ENCODE measurements at regions of chr13 and their contacts with region 1.

Region 1: GRCh38 chr13:20902438-20903163 is at the start of gene XPO4:
- DNase-seq: peak; percentile 77 to 81 (median 79)
- H3K4me3 ChIP-seq: peak within 1 kb of the TSS; percentile 97 to 98
- H3K4me3 Mint-ChIP-seq: peak within 1 kb of the TSS; percentile 93 to 98 (median 96)
- H3K27ac ChIP-seq: peak within 1 kb of the TSS; percentile 89
- H3K27ac Mint-ChIP-seq: peak within 1 kb of the TSS; percentile 89 to 98 (median 95)
- H3K4me1 ChIP-seq: peaks cover 34% of the 10 kb centered on the region
- H3K4me1 Mint-ChIP-seq: peaks cover 23 to 38% (median 29%) of the 10 kb centered on the region in 4 donors
- H3K27me3 ChIP-seq: no peaks in the 10 kb centered on the region
- H3K27me3 Mint-ChIP-seq: peaks cover 0 to 2% of the 10 kb centered on the region in 2 donors
- total RNA-seq, gene XPO4: 25.5 to 27.4 TPM

Region 2: DNA sequence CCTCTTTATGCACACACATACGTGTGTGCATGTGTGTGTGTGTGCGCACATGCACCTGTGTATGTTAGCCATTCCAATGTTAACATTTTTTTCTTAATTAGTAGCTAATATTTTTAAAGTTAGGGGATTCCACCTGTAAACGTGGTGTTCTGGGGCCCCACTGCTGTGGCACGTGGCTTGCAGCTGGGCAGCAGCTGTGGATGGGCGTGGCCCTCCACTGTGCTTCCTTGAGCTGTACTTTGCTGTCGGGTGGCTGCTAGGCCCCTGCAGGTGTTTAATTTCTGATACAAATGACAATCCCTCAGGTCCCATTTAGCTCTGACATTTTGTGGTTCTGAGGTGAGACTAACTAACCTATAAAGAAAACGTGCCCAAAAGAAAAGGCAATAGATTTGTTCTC is 611.6 kb before region 1 on chr13:
- CTCF ChIA-PET with region 1: no interaction called
- POLR2A ChIA-PET with region 1: no interaction called
- intact Hi-C with region 1: no loop called
- DNase-seq: no peak
- H3K4me3 ChIP-seq: no peak overlapping the region
- H3K4me3 Mint-ChIP-seq: no peak overlapping the region
- H3K27ac ChIP-seq: no peak overlapping the region
- H3K27ac Mint-ChIP-seq: no peak overlapping the region
- H3K4me1 ChIP-seq: no peaks in the 10 kb centered on the region
- H3K4me1 Mint-ChIP-seq: no peaks in the 10 kb centered on the region
- H3K27me3 ChIP-seq: no peaks in the 10 kb centered on the region
- H3K27me3 Mint-ChIP-seq: peaks cover 0 to 2% of the 10 kb centered on the region in 2 donors

Region 3: DNA sequence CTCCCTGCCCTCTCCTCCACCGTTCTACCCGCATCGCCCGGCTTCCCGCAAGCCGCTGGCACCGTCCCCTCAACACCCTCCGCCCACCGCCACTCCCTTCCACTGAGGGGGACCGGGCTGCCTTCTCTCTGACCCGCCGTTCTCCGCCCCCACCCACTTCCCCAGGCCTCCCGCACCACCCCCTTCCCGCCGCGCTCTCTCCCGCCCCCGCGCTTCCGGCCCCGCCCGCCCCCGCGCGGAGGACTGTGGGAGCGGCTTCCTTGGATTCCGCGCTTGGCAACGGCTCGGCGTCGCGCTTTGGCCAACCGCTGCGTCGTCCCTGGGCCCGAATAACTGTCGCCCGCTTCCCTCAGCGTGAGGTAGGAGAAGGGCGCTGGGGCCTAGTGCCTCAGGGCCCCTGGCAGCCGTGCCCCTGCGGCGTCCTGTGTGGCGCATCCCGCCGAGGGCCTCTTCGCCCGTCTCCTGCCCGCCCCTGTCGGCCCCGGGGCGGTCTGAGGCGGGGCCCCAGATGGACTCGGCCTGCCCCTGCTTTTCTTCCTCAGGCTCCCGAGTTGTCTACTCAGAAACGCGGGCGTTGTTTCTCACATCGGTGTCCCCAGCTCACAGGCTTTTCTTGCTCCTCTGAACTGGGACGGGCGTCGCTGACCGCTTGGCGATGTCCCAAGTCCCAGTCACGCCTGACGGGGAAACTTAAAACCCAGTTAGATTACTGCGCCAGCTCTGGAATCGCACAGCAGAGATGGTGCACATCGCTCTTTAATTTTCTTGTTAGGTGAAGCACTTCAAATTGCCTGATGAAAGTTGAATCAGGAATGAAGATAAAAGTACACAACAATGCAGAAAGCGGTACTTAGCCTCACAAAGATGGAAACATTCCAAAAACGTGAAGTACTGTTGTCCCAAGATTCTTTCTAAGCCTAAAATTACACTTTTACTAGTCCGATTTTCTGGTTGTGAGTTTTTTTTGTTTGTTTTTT is 335.4 kb before region 1 on chr13 and contains the start of gene IFT88:
- CTCF ChIA-PET with region 1: no interaction called
- POLR2A ChIA-PET with region 1: interaction called, 3 read pairs
- intact Hi-C with region 1: loop called (anchors 2 kb)
- DNase-seq: peak; percentile 78 to 86 (median 80)
- H3K4me3 ChIP-seq: peak within 1 kb of the TSS; percentile 56 to 61
- H3K4me3 Mint-ChIP-seq: peak within 1 kb of the TSS; percentile 92 to 95 (median 94)
- H3K27ac ChIP-seq: peak within 1 kb of the TSS; percentile 53
- H3K27ac Mint-ChIP-seq: peak within 1 kb of the TSS; percentile 92 to 96 (median 92)
- H3K4me1 ChIP-seq: peaks cover 16% of the 10 kb centered on the region
- H3K4me1 Mint-ChIP-seq: peaks cover 10 to 19% (median 14%) of the 10 kb centered on the region in 4 donors
- H3K27me3 ChIP-seq: no peaks in the 10 kb centered on the region
- H3K27me3 Mint-ChIP-seq: no peaks in the 10 kb centered on the region
- total RNA-seq, gene IFT88: 8.3 to 9.8 TPM

Region 4: GRCh38 chr13:20891768-20892167 is 10.8 kb before region 1 on chr13:
- CTCF ChIA-PET with region 1: interaction called, 3 read pairs
- POLR2A ChIA-PET with region 1: interaction called, 16 read pairs
- intact Hi-C with region 1: no loop called
- DNase-seq: peak in 4 of 5 donors; percentile 43 to 51 (median 48)
- H3K4me3 ChIP-seq: no peak overlapping the region
- H3K4me3 Mint-ChIP-seq: peak overlapping the region in 5 of 8 donors; percentile 13 to 57 (median 26)
- H3K27ac ChIP-seq: no peak overlapping the region
- H3K27ac Mint-ChIP-seq: peak overlapping the region in 4 of 7 donors; percentile 17 to 68 (median 47)
- H3K4me1 ChIP-seq: peaks cover 16% of the 10 kb centered on the region
- H3K4me1 Mint-ChIP-seq: peaks cover 27 to 62% (median 38%) of the 10 kb centered on the region in 4 donors
- H3K27me3 ChIP-seq: no peaks in the 10 kb centered on the region
- H3K27me3 Mint-ChIP-seq: no peaks in the 10 kb centered on the region

Region 5: DNA sequence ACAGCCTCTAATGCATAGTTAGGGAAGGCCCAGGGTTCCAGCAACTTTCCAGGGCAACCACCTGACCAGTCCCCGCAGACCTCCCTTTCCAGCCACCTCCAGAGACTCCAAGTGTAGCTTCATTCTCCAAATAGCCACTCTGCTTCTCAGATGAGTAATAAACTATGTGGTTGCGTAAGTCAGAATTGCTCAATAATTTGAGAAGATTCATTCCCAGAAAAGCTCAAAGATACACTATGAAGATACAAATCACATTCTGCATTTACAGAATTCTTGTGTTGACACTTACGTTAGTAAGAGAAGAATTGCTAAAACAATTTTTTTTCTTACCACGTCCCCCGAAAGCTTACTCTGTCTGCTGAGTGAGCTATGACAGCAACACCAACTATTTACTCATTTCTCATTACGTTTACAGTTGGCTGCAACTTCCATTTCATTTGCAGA is 167.0 kb after region 1 on chr13:
- CTCF ChIA-PET with region 1: no interaction called
- POLR2A ChIA-PET with region 1: no interaction called
- intact Hi-C with region 1: no loop called
- DNase-seq: no peak
- H3K4me3 ChIP-seq: no peak overlapping the region
- H3K4me3 Mint-ChIP-seq: no peak overlapping the region
- H3K27ac ChIP-seq: no peak overlapping the region
- H3K27ac Mint-ChIP-seq: no peak overlapping the region
- H3K4me1 ChIP-seq: peaks cover 4% of the 10 kb centered on the region
- H3K4me1 Mint-ChIP-seq: peaks cover 6 to 21% (median 13%) of the 10 kb centered on the region in 4 donors
- H3K27me3 ChIP-seq: no peaks in the 10 kb centered on the region
- H3K27me3 Mint-ChIP-seq: peaks cover 2 to 4% of the 10 kb centered on the region in 2 donors

Region 6: GRCh38 chr13:21603531-21604448 is 701.2 kb after region 1 on chr13 and contains the start of gene MICU2:
- CTCF ChIA-PET with region 1: no interaction called
- POLR2A ChIA-PET with region 1: no interaction called
- intact Hi-C with region 1: loop called (anchors 2 kb)
- DNase-seq: peak; percentile 96 to 97 (median 97)
- H3K4me3 ChIP-seq: peak within 1 kb of the TSS; percentile 78 to 83
- H3K4me3 Mint-ChIP-seq: peak within 1 kb of the TSS; percentile 86 to 97 (median 89)
- H3K27ac ChIP-seq: peak within 1 kb of the TSS; percentile 85
- H3K27ac Mint-ChIP-seq: peak within 1 kb of the TSS; percentile 90 to 97 (median 95)
- H3K4me1 ChIP-seq: peaks cover 36% of the 10 kb centered on the region
- H3K4me1 Mint-ChIP-seq: peaks cover 28 to 58% (median 36%) of the 10 kb centered on the region in 4 donors
- H3K27me3 ChIP-seq: no peaks in the 10 kb centered on the region
- H3K27me3 Mint-ChIP-seq: peaks cover 4% of the 10 kb centered on the region in 2 donors
- total RNA-seq, gene MICU2: 46.0 to 50.3 TPM

Measured in CD4-positive, alpha-beta memory T cell (primary cell).